Body of pancreas (tissue), 4 donors: ENCODE measurements at regions of chr17 and their contacts with region 1.

Region 1: DNA sequence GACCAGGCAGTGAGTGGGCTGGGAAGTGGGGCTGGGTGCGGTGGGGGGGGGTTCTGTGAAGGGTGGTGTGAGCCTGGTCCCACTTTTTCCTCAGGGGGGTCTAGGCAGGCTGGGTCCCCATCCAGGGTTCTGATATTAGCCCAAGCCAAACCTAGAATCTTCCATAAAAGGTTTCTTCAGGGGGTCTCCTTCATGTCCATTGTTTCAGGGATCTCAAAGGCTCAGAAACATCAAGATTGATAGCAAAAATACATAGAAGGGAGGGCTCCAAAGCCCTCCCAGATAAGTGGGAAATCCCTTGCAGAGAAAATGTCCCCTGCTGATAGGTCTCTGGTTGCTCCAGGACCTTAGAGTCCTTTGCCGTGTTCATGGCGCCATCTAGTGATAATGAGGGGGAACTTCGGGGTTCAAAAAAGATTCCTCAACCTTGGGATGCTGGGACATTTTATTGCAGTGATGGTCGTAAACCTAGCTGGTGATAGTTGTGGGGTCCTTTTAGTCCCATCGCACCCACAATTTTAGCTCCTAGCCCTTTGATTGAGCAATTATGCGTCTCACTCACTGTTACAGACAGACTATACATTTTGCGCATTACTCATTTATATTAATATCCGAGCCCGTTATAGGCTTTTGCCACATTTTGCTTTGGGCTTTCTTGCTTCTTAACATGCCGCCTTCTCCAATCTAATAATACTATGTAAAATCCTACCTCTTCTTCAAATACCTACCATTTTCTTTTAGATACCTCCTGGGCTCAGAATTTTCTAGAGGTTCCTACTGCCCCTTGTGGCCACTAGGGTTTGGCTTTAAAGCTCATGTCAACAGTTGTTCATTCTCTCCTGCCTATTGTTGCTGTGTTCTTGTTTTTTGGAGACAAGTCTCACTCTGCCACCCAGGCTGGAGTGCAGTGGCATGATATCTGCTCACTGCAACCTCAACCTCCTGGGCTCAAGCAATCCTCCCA is 35.1 kb downstream of the IGF2BP1 start:
- DNase-seq: peak; percentile 45 to 58 (median 53)
- ATAC-seq: peak; percentile 79
- H3K4me3 ChIP-seq: no peak overlapping the region
- H3K27ac ChIP-seq: no peak overlapping the region
- H3K4me1 ChIP-seq: no peaks in the 10 kb centered on the region
- H3K27me3 ChIP-seq: peaks cover 0 to 3% of the 10 kb centered on the region in 2 donors
- CTCF ChIP-seq: peak; percentile 41 to 88 (median 80)
- POLR2A ChIP-seq: no peak

Region 2: GRCh38 chr17:48804925-48805411 is 227.3 kb before region 1 on chr17:
- intact Hi-C with region 1: loop called (anchors 10 kb)
- DNase-seq: peak; percentile 56 to 67 (median 60)
- ATAC-seq: peak; percentile 84
- H3K4me3 ChIP-seq: no peak overlapping the region
- H3K27ac ChIP-seq: peak overlapping the region in 3 of 4 donors; percentile 4 to 41 (median 41)
- H3K4me1 ChIP-seq: peaks cover 42% of the 10 kb centered on the region
- H3K27me3 ChIP-seq: peaks cover 0 to 4% of the 10 kb centered on the region in 2 donors
- CTCF ChIP-seq: peak; percentile 74 to 92 (median 84)
- POLR2A ChIP-seq: no peak

Region 3: GRCh38 chr17:48892940-48893645 is 139.2 kb before region 1 on chr17:
- intact Hi-C with region 1: loop called (anchors 5 kb)
- DNase-seq: no peak
- ATAC-seq: no peak
- H3K4me3 ChIP-seq: peak overlapping the region; percentile 77 to 78
- H3K27ac ChIP-seq: peak overlapping the region; percentile 42 to 92 (median 82)
- H3K4me1 ChIP-seq: peaks cover 23% of the 10 kb centered on the region
- H3K27me3 ChIP-seq: no peaks in the 10 kb centered on the region
- CTCF ChIP-seq: no peak
- POLR2A ChIP-seq: no peak